Transverse colon (tissue), 4 donors: ENCODE measurements at regions of chr18 and their contacts with region 1.

Region 1: GRCh38 chr18:50559752-50560680 is at the start of gene MAPK4:
- DNase-seq: peak; percentile 33
- H3K4me3 ChIP-seq: peak within 1 kb of the TSS; percentile 43 to 82 (median 59)
- H3K27ac ChIP-seq: peak within 1 kb of the TSS; percentile 50 to 83 (median 70)
- H3K4me1 ChIP-seq: peaks cover 12 to 20% (median 15%) of the 10 kb centered on the region in 4 donors
- H3K27me3 ChIP-seq: peaks cover 63% of the 10 kb centered on the region
- CTCF ChIP-seq: no peak
- EP300 ChIP-seq: no peak
- POLR2A ChIP-seq: no peak
- total RNA-seq, gene MAPK4: 1.6 to 20.1 (median 5.7) TPM

Region 2: GRCh38 chr18:50612411-50612810 is 52.4 kb after region 1 on chr18:
- in situ Hi-C with region 1: no loop called
- intact Hi-C with region 1: loop called (anchors 2 kb)
- DNase-seq: no peak
- H3K4me3 ChIP-seq: no peak overlapping the region
- H3K27ac ChIP-seq: no peak overlapping the region
- H3K4me1 ChIP-seq: no peaks in the 10 kb centered on the region
- H3K27me3 ChIP-seq: no peaks in the 10 kb centered on the region
- CTCF ChIP-seq: no peak
- EP300 ChIP-seq: no peak
- POLR2A ChIP-seq: no peak

Region 3: DNA sequence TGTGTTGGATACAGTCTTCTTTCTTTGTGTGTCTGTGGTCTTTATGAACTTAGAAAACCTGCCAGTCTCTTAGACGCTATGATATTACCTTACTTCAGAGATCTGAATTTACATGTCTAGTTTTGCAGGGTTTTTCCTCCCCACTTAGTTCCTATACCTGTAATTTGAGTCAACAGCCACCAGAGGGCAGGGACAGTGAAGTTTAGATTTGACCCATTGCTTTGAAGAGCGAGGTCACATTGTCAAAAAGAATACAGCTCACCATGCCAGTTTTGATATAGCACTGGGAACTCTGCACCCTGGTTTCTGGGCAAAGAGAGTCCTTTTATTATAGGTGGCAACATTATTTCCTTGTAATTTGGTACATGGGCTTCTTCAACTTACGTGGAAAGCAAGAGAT is 102.2 kb after region 1 on chr18:
- in situ Hi-C with region 1: loop called in 1 of 4 experiments (anchors 25 kb)
- intact Hi-C with region 1: no loop called
- DNase-seq: no peak
- H3K4me3 ChIP-seq: no peak overlapping the region
- H3K27ac ChIP-seq: no peak overlapping the region
- H3K4me1 ChIP-seq: no peaks in the 10 kb centered on the region
- H3K27me3 ChIP-seq: no peaks in the 10 kb centered on the region
- CTCF ChIP-seq: peak in 4 of 5 experiments; percentile 21 to 30 (median 28)
- EP300 ChIP-seq: no peak
- POLR2A ChIP-seq: no peak

Region 4: DNA sequence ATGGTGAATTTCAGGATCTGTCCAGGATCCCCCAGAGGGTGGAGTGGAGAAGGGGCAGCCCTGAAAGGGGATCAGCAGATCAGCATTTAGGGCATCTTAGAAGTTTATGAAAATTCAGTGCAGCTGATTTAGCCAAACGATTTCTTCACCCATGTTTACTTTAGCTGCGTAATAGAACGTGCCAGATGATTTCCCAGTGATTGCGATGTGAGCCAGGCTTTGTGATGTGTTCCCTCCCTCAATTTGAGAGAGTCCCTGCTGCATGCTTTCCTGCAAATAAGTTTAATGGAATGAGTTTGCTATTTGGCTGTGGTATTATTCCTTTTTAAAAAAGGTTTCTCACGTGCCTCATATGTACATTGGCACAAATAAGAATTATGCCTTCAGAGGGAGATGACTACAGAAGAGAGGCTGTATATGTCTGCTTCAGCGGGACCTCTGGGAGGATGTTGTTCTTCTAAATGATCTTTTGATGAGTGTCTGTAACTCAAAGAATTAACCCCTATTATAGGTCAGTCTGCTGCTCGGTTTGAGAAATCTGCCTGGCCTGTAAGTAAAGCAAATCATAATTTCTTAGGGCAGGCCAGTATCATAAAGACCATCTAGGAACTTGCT is 147.9 kb after region 1 on chr18:
- in situ Hi-C with region 1: no loop called
- intact Hi-C with region 1: no loop called
- DNase-seq: no peak
- H3K4me3 ChIP-seq: no peak overlapping the region
- H3K27ac ChIP-seq: no peak overlapping the region
- H3K4me1 ChIP-seq: peaks cover 0 to 4% (median 0%) of the 10 kb centered on the region in 4 donors
- H3K27me3 ChIP-seq: no peaks in the 10 kb centered on the region
- CTCF ChIP-seq: no peak
- EP300 ChIP-seq: no peak
- POLR2A ChIP-seq: no peak